Heart left ventricle (tissue), 16 donors: ENCODE measurements at regions of chr18 and their contacts with region 1.

Region 1: DNA sequence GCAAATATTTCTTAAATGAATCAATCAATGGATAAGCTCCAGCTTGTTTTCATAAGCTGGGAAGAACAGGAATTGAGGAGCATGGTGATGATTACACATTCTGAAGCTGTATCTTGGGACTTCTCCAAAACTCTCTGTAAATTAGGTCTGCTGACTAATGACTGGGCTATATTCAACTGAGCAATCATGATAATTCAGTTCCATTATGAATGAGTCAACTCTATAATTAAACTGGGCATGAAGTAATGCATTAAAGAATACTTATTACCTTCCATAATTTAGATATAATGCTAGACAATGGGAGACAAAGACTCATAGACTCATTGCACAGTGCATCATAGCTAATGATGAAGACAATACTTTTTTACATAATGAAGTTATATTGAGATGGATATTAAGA is 207.4 kb downstream of the CBLN2 start:
- DNase-seq: no peak
- ATAC-seq: no peak
- H3K4me3 ChIP-seq: no peak overlapping the region
- H3K27ac ChIP-seq: no peak overlapping the region
- H3K4me1 ChIP-seq: no peaks in the 10 kb centered on the region
- H3K27me3 ChIP-seq: no peaks in the 10 kb centered on the region
- CTCF ChIP-seq: no peak
- POLR2A ChIP-seq: no peak

Region 2: GRCh38 chr18:72391951-72392350 is 55.2 kb after region 1 on chr18:
- intact Hi-C with region 1: loop called in 1 of 10 experiments (anchors 10 kb)
- DNase-seq: no peak
- ATAC-seq: no peak
- H3K4me3 ChIP-seq: no peak overlapping the region
- H3K27ac ChIP-seq: no peak overlapping the region
- H3K4me1 ChIP-seq: no peaks in the 10 kb centered on the region
- H3K27me3 ChIP-seq: no peaks in the 10 kb centered on the region
- CTCF ChIP-seq: no peak
- POLR2A ChIP-seq: no peak